ENCODE measurements at regions of chr20 and their contacts with region 1.

Region 1: GRCh38 chr20:34922654-34923424 is 32.8 kb downstream of the GSS start:
- DNase-seq: peak in 1 of 2 donors; percentile 28
- ATAC-seq: peak in 7 of 8 donors; percentile 57 to 88 (median 80)
- H3K4me3 ChIP-seq: no peak overlapping the region
- H3K27ac ChIP-seq: peak overlapping the region; percentile 22 to 76 (median 56)
- H3K4me1 ChIP-seq: peaks cover 0 to 26% (median 12%) of the 10 kb centered on the region in 9 donors
- H3K27me3 ChIP-seq: no peaks in the 10 kb centered on the region
- CTCF ChIP-seq: no peak

Region 2: DNA sequence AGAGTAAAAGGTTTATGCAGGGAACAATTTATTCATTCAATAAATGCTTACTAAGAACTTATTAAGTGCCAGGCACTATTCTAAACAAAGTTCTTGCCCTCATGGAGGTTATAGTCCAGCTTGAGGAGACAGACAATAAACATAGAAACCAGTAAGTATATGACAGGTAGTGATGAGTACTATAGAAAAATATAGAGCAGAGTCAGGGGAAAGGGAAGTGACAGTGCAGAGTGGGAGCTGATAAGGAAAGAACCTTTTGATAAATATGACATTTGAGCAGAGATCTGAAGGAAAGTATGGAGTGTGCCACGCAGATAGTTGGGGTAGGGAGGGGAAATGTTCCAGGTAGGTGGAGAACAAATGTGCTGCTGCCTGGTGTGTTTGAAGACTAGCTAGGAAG is 34.4 kb before region 1 on chr20:
- intact Hi-C with region 1: loop called in 1 of 10 experiments (anchors 5 kb)
- DNase-seq: no peak
- ATAC-seq: no peak
- H3K4me3 ChIP-seq: no peak overlapping the region
- H3K27ac ChIP-seq: no peak overlapping the region
- H3K4me1 ChIP-seq: peaks cover 0 to 32% (median 10%) of the 10 kb centered on the region in 9 donors
- H3K27me3 ChIP-seq: no peaks in the 10 kb centered on the region
- CTCF ChIP-seq: no peak

Region 3: GRCh38 chr20:34938502-34939163 is 15.8 kb after region 1 on chr20:
- intact Hi-C with region 1: loop called in 2 of 10 experiments (anchors 1 to 2 kb)
- DNase-seq: peak; percentile 71 to 76
- ATAC-seq: peak; percentile 79 to 93 (median 85)
- H3K4me3 ChIP-seq: no peak overlapping the region
- H3K27ac ChIP-seq: peak overlapping the region; percentile 43 to 85 (median 80)
- H3K4me1 ChIP-seq: peaks cover 0 to 42% (median 23%) of the 10 kb centered on the region in 9 donors
- H3K27me3 ChIP-seq: no peaks in the 10 kb centered on the region
- CTCF ChIP-seq: no peak

Region 4: GRCh38 chr20:35092524-35093266 is 169.9 kb after region 1 on chr20 and contains the start of gene TRPC4AP:
- intact Hi-C with region 1: no loop called
- DNase-seq: peak; percentile 88 to 92
- ATAC-seq: peak; percentile 93 to 97 (median 96)
- H3K4me3 ChIP-seq: peak within 1 kb of the TSS; percentile 62 to 96 (median 88)
- H3K27ac ChIP-seq: peak within 1 kb of the TSS; percentile 84 to 97 (median 94)
- H3K4me1 ChIP-seq: peaks cover 9 to 62% (median 31%) of the 10 kb centered on the region in 9 donors
- H3K27me3 ChIP-seq: no peaks in the 10 kb centered on the region
- CTCF ChIP-seq: peak; percentile 95 to 99 (median 98)
- total RNA-seq, gene TRPC4AP: 32.2 to 46.4 (median 38.5) TPM

Measured in heart right ventricle (tissue), 16 donors.